H1 (cell line): ENCODE measurements at regions of chr2 and their contacts with region 1.

Region 1: GRCh38 chr2:226813148-226813701 is 13.6 kb upstream of the IRS1 start:
- DNase-seq: no peak
- H3K4me3 ChIP-seq: no peak overlapping the region
- H3K27ac ChIP-seq: no peak overlapping the region
- H3K4me1 ChIP-seq: peaks cover 0 to 3% (median 0%) of the 10 kb centered on the region in 4 experiments; a peak in 1 of 7 replicates
- H3K27me3 ChIP-seq: no peaks in the 10 kb centered on the region
- CTCF ChIP-seq: peak in 2 of 3 experiments; percentile 59 to 84; a peak in 3 of 4 replicates
- EP300 ChIP-seq: no peak
- POLR2A ChIP-seq: no peak
- RAD21 ChIP-seq: peak; percentile 87

Region 2: GRCh38 chr2:226828191-226828590 is 15.0 kb after region 1 on chr2:
- CTCF ChIA-PET with region 1: interaction called, 10 read pairs
- POLR2A ChIA-PET with region 1: no interaction called
- DNase-seq: no peak
- H3K4me3 ChIP-seq: no peak overlapping the region
- H3K27ac ChIP-seq: no peak overlapping the region
- H3K4me1 ChIP-seq: no peaks in the 10 kb centered on the region
- H3K27me3 ChIP-seq: no peaks in the 10 kb centered on the region
- CTCF ChIP-seq: no peak
- EP300 ChIP-seq: no peak
- POLR2A ChIP-seq: no peak
- RAD21 ChIP-seq: no peak